ENCODE measurements at regions of chr15 and their contacts with region 1.

Region 1: GRCh38 chr15:58309963-58310928 is 121.5 kb upstream of the LIPC start:
- DNase-seq: no peak
- H3K4me3 Mint-ChIP-seq: no peak overlapping the region
- H3K27ac Mint-ChIP-seq: no peak overlapping the region
- H3K4me1 Mint-ChIP-seq: peaks cover 26% of the 10 kb centered on the region
- H3K27me3 Mint-ChIP-seq: no peaks in the 10 kb centered on the region

Region 2: DNA sequence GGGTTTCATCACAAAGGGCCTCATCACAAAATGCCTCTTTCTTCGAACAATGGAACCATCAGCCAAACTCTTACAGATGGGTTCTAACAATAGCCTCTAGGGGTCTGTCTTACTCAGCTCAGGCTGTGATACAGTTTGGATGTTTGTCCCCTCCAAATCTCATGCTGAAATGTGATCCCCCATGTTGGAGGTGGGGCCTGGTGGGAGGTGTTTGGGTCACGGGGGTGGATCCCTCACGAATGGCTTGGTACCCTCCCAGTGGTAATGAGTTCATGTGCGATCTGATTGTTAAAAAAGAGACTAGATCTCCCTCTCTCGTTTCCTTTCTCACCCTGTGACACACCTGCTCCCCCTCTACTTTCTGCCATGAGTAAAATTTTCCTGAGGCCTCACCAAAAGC is 73.6 kb after region 1 on chr15:
- CTCF ChIA-PET with region 1: no interaction called
- intact Hi-C with region 1: loop called (anchors 2 kb)
- DNase-seq: peak; percentile 73
- H3K4me3 Mint-ChIP-seq: no peak overlapping the region
- H3K27ac Mint-ChIP-seq: peak overlapping the region; percentile 14
- H3K4me1 Mint-ChIP-seq: peaks cover 17% of the 10 kb centered on the region
- H3K27me3 Mint-ChIP-seq: no peaks in the 10 kb centered on the region

Measured in activated naive CD4-positive, alpha-beta T cell treated with anti-CD3 and anti-CD28 coated beads for 36 hours (primary cell).